HCT116 (cell line): ENCODE measurements at regions of chr17 and their contacts with region 1.

Region 1: DNA sequence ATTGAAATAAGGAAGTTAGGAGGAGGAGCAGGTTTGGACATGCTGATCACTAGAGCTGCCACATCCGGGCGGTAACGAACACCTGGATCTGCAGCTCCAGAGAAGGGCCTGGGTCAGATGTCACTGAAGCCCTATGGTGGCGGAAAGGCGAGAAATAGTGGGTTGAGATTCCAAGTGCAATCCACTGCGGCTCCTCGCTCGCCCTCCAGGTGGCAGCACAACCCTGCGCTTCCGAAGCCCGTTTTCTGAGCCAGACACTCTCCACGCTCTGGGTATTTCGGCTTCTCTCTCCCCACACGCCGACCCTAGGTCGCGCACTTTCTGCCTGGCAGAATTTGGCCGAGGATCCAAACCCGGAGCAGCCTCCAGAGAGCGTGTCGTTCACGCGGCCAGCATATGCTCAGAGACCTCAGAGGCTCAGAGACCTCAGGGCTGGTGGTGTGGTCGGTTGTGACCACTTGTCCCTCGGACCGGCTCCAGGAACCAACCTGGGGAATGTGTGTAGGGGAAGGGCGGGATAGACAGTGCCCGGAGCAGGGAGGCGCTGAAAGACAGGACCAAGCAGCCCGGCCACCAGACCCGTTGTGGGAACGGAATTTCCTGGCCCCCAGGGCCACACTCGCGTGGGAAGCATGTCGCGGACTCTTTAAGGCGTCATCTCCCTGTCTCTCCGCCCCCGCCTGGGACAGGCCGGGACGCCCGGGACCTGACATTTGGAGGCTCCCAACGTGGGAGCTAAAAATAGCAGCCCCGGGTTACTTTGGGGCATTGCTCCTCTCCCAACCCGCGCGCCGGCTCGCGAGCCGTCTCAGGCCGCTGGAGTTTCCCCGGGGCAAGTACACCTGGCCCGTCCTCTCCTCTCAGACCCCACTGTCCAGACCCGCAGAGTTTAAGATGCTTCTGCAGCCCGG is 744 bp upstream of the SLC2A4 start:
- DNase-seq: peak; percentile 70
- ATAC-seq: peak; percentile 73
- H3K4me3 ChIP-seq: peak overlapping the region; percentile 45 to 65
- H3K27ac ChIP-seq: peak overlapping the region; percentile 73
- H3K4me1 ChIP-seq: peaks cover 13 to 34% of the 10 kb centered on the region in 2 experiments
- H3K27me3 ChIP-seq: no peaks in the 10 kb centered on the region
- CTCF ChIP-seq: peak; percentile 91 to 97 (median 95)
- POLR2A ChIP-seq: no peak
- RAD21 ChIP-seq: peak; percentile 98

Region 2: GRCh38 chr17:7261172-7261927 is 19.4 kb before region 1 on chr17:
- CTCF ChIA-PET with region 1: interaction called, 6 read pairs
- POLR2A ChIA-PET with region 1: interaction called, 6 read pairs
- RAD21 ChIA-PET with region 1: no interaction called
- intact Hi-C with region 1: loop called (anchors 2 kb)
- DNase-seq: no peak
- ATAC-seq: peak; percentile 48
- H3K4me3 ChIP-seq: peak overlapping the region; percentile 98 to 99
- H3K27ac ChIP-seq: peak overlapping the region; percentile 94
- H3K4me1 ChIP-seq: peaks cover 38 to 60% of the 10 kb centered on the region in 2 experiments
- H3K27me3 ChIP-seq: no peaks in the 10 kb centered on the region
- CTCF ChIP-seq: no peak
- POLR2A ChIP-seq: no peak
- RAD21 ChIP-seq: no peak

Region 3: GRCh38 chr17:7296189-7296902 is 15.6 kb after region 1 on chr17:
- CTCF ChIA-PET with region 1: interaction called, 38 read pairs
- POLR2A ChIA-PET with region 1: interaction called, 7 read pairs
- RAD21 ChIA-PET with region 1: interaction called, 14 to 17 read pairs
- intact Hi-C with region 1: loop called (anchors 1 kb)
- DNase-seq: peak; percentile 66
- ATAC-seq: peak; percentile 77
- H3K4me3 ChIP-seq: peak overlapping the region; percentile 25 to 33
- H3K27ac ChIP-seq: peak overlapping the region; percentile 37
- H3K4me1 ChIP-seq: peaks cover 17 to 41% of the 10 kb centered on the region in 2 experiments; a peak in 3 of 4 replicates
- H3K27me3 ChIP-seq: no peaks in the 10 kb centered on the region
- CTCF ChIP-seq: peak; percentile 91 to 94 (median 93)
- POLR2A ChIP-seq: no peak
- RAD21 ChIP-seq: peak; percentile 97

Region 4: GRCh38 chr17:7344399-7344798 is 63.6 kb after region 1 on chr17:
- CTCF ChIA-PET with region 1: interaction called, 10 read pairs
- POLR2A ChIA-PET with region 1: no interaction called
- RAD21 ChIA-PET with region 1: no interaction called
- intact Hi-C with region 1: loop called (anchors 1 kb)
- DNase-seq: no peak
- ATAC-seq: no peak
- H3K4me3 ChIP-seq: no peak overlapping the region
- H3K27ac ChIP-seq: no peak overlapping the region
- H3K4me1 ChIP-seq: peaks cover under 1 to 4% of the 10 kb centered on the region in 2 experiments; a peak in 3 of 4 replicates
- H3K27me3 ChIP-seq: no peaks in the 10 kb centered on the region
- CTCF ChIP-seq: no peak
- POLR2A ChIP-seq: no peak
- RAD21 ChIP-seq: no peak